ENCODE measurements at regions of chr7 and their contacts with region 1.

Region 1: GRCh38 chr7:76314042-76314721 is 11.7 kb downstream of the HSPB1 start:
- DNase-seq: peak; percentile 89

Region 2: DNA sequence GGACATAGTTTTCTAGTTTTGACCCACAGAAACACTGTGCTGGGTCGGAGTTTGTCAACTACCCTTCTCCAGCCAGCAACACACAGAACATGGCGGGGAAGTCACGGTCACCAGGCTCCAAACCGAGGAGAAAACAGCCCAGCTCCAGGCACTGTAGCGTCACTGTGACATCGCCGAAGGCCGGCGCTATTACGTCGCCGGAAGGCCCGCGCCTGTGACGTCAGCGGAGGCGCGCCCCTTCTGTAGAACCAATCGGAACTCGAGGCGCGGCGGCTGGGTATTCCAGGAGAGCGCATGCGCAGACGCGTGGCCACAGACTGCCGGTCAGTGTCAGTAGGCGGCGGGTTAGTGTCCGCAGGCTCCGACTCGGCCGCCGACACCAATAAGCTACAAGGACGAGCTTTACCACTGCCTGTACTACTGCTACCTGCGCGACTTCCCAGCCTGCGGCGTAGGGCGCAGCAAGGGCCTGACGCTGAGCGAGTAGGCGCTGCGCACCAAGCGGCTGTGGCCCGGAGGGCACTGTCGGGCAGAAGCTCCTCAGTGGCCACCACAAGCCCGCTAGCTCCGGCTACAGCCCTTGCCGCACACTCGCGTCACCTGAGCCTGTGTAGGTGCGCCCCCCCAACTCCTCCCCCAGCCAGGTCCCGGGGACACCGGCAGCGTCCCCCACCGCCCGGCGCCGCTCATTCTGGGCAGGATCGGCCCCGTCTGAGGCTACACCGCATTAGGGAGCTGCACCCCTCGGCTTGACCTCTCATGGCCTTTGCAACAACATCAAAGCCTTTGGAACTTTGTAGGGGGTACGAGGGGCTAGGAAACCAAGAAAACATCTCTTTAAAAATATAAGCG is 147.6 kb before region 1 on chr7:
- CTCF ChIA-PET with region 1: no interaction called
- POLR2A ChIA-PET with region 1: interaction called, 15 read pairs
- DNase-seq: peak; percentile 94

Region 3: GRCh38 chr7:76179686-76180085 is 134.5 kb before region 1 on chr7:
- CTCF ChIA-PET with region 1: interaction called, 13 read pairs
- POLR2A ChIA-PET with region 1: interaction called, 4 read pairs
- DNase-seq: no peak

Region 4: DNA sequence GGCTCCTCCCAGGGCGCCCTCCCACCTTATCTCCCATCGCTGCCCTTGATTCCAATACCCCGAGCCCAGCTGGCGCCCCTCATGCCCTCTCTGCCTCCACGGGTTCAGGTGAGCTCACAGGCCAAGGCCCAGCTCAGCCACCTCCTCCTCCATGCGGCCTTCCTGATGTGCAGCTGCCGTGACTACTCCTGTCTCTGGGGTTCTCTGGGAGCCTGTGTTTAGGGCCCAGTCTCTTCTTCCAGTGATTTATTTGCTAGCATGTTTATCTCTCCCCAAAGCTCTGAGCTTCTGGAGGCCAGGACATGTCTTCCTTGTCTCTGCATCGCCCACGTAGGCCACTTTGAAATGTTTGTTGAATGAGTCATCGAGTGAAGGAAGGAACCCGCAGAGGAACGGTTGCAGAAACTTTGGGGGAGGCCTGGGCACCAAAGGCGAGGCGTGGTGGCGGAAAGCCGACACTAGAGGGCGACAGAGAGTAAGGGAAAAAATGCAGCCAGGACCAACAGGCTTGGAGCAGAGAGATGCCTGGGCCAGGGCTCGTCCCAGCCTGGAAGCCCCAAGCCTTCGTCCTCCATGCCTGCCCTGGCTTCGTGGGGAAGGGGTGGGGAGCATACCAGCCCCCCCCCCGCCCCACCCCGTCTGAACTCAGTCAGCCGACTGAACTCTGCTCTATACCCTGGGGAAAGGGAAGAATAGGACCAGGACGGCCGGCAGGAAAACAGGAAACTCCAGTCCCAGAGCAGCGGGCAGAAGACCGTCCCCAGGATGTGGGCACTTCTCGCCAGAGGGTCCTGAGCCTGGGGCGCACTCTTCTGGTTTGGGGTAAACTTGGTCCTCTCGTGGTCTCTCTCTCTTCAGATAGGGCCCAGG is 22.6 kb before region 1 on chr7:
- CTCF ChIA-PET with region 1: interaction called, 21 read pairs
- POLR2A ChIA-PET with region 1: interaction called, 6 read pairs
- DNase-seq: peak; percentile 89

Region 5: DNA sequence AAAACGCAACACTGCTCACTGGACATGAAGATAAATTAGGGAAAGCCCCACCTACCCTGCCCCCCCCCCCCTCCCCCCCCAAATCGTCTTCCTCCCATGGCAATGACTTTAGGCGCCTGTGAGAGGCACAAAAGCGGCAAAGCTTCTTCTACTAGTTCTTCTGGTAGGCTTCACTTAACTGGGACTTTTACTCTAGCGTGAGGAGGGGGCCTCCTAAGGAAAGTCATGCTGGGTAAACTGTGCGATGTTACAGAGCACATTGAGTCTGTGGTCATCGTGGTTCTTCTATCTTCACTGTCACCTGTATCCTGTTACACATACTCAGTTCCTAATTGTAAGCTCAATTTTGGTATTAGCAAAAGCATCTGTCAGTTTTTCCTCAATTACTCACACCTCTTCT is 13.4 kb after region 1 on chr7:
- CTCF ChIA-PET with region 1: no interaction called
- POLR2A ChIA-PET with region 1: interaction called, 13 read pairs
- DNase-seq: no peak

Region 6: GRCh38 chr7:76359111-76359978 is 45.2 kb after region 1 on chr7:
- CTCF ChIA-PET with region 1: interaction called, 5 read pairs
- POLR2A ChIA-PET with region 1: interaction called, 21 read pairs
- DNase-seq: peak; percentile 96

Region 7: GRCh38 chr7:76403780-76404494 is 89.8 kb after region 1 on chr7:
- CTCF ChIA-PET with region 1: no interaction called
- POLR2A ChIA-PET with region 1: no interaction called
- DNase-seq: no peak

Region 8: GRCh38 chr7:76515999-76516443 is 201.8 kb after region 1 on chr7:
- CTCF ChIA-PET with region 1: no interaction called
- POLR2A ChIA-PET with region 1: no interaction called
- DNase-seq: no peak

Measured in HEK293T (cell line).